IMR-90 (cell line): ENCODE measurements at regions of chr2 and their contacts with region 1.

Region 1: DNA sequence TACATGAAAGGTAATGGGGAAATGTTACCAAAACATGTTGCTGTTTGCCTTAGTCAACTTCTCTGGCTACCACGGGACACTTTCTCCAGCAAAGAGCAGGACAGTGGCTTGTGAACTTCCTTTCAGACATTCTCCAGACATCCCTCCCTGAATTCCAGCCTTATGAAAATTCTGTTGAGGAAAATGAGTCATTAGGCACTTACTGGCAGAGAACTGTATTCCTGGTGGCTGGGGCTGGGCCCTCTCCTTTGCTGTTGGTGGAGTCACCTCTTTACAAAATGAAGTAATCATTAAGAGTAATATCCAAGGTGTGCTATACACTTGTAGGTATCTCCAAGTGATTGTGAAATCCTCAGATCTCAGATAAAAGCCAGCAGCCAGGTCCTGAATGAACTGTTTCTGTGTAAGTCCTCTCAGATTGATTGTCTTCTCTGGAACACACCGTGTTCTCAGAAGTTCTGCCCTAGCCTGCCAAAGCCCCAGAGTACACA is 1.3 kb upstream of the FAP start:
- DNase-seq: peak; percentile 93
- ATAC-seq: peak; percentile 60
- H3K4me3 ChIP-seq: no peak overlapping the region
- H3K27ac ChIP-seq: peak overlapping the region; percentile 98
- H3K4me1 ChIP-seq: peaks cover 16% of the 10 kb centered on the region
- H3K27me3 ChIP-seq: no peaks in the 10 kb centered on the region
- CTCF ChIP-seq: no peak
- POLR2A ChIP-seq: peak; percentile 68; the same call in 1 of the 2 replicates
- RAD21 ChIP-seq: no peak

Region 2: DNA sequence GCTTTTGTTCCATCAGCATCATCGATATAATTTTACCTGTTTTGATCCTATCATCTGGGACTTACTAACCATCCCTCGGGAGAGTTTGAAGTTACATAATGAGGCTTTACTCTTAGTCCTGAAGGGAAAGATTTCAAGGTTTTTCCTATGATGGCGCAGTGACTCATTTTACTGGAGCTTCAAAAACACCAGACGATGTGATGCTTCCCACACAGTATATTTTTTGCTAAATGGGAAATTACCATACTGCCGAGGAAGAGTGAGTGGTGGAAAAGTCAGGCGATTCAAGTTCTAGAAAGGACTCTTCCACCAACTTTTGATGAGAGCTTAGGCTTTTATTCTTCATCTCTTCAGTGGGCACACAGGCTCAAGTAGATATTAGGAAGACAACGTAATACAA is 47.9 kb before region 1 on chr2:
- CTCF ChIA-PET with region 1: no interaction called
- POLR2A ChIA-PET with region 1: interaction called, 7 read pairs
- dilution Hi-C with region 1: no loop called
- in situ Hi-C with region 1: no loop called
- intact Hi-C with region 1: loop called (anchors 5 kb)
- DNase-seq: peak; percentile 91
- ATAC-seq: peak; percentile 40
- H3K4me3 ChIP-seq: no peak overlapping the region
- H3K27ac ChIP-seq: peak overlapping the region; percentile 10; the same call in 1 of the 2 replicates
- H3K4me1 ChIP-seq: peaks cover 21% of the 10 kb centered on the region
- H3K27me3 ChIP-seq: no peaks in the 10 kb centered on the region
- CTCF ChIP-seq: no peak
- POLR2A ChIP-seq: no peak
- RAD21 ChIP-seq: no peak

Region 3: GRCh38 chr2:162295009-162295408 is 50.4 kb after region 1 on chr2:
- CTCF ChIA-PET with region 1: interaction called, 9 read pairs
- POLR2A ChIA-PET with region 1: no interaction called
- dilution Hi-C with region 1: no loop called
- in situ Hi-C with region 1: no loop called
- intact Hi-C with region 1: loop called (anchors 2 kb)
- DNase-seq: no peak
- ATAC-seq: no peak
- H3K4me3 ChIP-seq: no peak overlapping the region
- H3K27ac ChIP-seq: no peak overlapping the region
- H3K4me1 ChIP-seq: peaks cover 2% of the 10 kb centered on the region; the same call in 1 of the 2 replicates
- H3K27me3 ChIP-seq: no peaks in the 10 kb centered on the region
- CTCF ChIP-seq: no peak
- POLR2A ChIP-seq: no peak
- RAD21 ChIP-seq: no peak

Region 4: DNA sequence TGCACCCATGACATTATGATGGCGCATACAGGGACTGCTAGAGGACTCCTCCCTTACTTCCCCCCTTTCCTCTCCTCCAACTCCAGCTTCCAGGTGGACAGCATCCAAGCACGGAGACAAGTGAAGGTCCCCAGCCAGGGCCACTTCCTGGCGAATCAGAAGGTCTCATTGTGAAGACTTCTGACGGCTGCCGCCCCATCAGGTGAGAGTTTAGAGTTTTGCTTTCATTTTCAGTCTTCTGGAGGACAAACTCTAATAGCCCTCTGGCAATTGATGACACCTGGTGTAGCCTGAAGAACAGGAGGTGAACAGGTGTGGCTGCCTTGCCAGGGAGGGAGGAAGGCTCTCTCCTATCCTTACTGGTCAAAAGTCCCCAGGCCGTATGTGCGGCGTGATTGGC is 671.3 kb after region 1 on chr2:
- CTCF ChIA-PET with region 1: no interaction called
- POLR2A ChIA-PET with region 1: no interaction called
- dilution Hi-C with region 1: no loop called
- in situ Hi-C with region 1: no loop called
- intact Hi-C with region 1: no loop called
- DNase-seq: no peak
- ATAC-seq: no peak
- H3K4me3 ChIP-seq: no peak overlapping the region
- H3K27ac ChIP-seq: no peak overlapping the region
- H3K4me1 ChIP-seq: no peaks in the 10 kb centered on the region
- H3K27me3 ChIP-seq: no peaks in the 10 kb centered on the region
- CTCF ChIP-seq: no peak
- POLR2A ChIP-seq: no peak
- RAD21 ChIP-seq: no peak